A673 (cell line): ENCODE measurements at regions of chr4 and their contacts with region 1.

Region 1: DNA sequence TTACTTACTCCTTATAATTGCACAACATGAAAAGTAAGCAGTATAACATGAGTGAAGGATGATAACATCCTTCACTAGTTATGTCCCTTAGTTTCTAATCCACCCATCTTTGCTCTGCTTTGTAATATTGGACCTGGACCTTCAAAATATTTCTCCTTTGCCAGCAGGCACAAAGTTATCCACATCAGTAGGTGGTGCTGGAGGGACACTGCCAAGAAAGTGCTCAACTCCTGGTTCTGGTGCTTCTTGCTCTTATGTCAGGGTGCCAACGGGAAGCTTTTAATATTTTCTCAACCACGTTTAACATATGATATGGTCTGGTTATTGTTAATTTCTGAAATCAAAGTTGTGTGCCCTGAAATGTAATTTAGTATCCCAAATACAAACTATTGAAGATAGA is 49.1 kb downstream of the TMEM165 start:
- DNase-seq: peak; percentile 25
- H3K4me3 ChIP-seq: no peak overlapping the region
- H3K27ac ChIP-seq: no peak overlapping the region
- H3K4me1 ChIP-seq: no peaks in the 10 kb centered on the region
- H3K27me3 ChIP-seq: no peaks in the 10 kb centered on the region
- CTCF ChIP-seq: peak; percentile 31; the same call in 1 of the 2 replicates

Region 2: DNA sequence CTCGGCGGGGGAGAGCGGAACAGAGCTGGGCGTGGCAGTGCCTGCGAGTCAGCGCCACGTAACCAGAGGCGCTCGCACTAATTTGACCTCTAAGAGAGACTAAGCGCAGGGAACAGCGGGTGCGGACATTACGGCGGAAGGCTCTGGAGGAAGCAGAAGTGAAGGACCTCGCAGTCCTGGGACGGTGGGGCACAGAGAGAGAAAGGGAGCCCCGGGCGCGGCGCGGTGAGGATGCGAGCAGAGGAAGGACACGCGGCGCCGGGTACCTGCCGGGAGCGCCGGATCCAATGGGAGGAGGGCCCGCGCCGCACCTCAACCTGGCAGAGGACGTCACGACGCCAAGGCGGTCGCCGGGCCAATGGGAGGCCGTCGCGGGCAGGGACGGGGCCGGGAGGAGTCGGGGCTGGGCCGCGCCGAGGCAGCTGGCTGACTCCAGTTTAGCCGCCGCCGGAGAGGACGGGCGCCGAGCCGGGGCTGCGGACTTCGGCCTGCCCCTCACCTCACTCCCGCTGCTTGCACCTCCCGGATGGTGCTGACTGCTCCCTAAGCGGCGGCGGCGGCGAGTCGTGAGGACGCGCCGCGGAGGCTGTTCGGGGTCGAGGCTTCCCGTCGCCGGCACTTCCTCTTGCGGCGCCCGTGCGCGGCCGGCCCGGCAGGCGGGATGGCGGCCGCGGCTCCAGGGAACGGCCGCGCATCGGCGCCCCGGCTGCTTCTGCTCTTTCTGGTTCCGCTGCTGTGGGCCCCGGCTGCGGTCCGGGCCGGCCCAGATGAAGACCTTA is 49.1 kb before region 1 on chr4 and contains the start of gene TMEM165:
- CTCF ChIA-PET with region 1: no interaction called
- POLR2A ChIA-PET with region 1: no interaction called
- intact Hi-C with region 1: no loop called
- DNase-seq: peak; percentile 79
- H3K4me3 ChIP-seq: peak within 1 kb of the TSS; percentile 78
- H3K27ac ChIP-seq: peak within 1 kb of the TSS; percentile 81
- H3K4me1 ChIP-seq: peaks cover 9% of the 10 kb centered on the region
- H3K27me3 ChIP-seq: no peaks in the 10 kb centered on the region
- CTCF ChIP-seq: no peak
- total RNA-seq, gene TMEM165: 33.5 and 34.7 TPM in 2 replicates

Region 3: DNA sequence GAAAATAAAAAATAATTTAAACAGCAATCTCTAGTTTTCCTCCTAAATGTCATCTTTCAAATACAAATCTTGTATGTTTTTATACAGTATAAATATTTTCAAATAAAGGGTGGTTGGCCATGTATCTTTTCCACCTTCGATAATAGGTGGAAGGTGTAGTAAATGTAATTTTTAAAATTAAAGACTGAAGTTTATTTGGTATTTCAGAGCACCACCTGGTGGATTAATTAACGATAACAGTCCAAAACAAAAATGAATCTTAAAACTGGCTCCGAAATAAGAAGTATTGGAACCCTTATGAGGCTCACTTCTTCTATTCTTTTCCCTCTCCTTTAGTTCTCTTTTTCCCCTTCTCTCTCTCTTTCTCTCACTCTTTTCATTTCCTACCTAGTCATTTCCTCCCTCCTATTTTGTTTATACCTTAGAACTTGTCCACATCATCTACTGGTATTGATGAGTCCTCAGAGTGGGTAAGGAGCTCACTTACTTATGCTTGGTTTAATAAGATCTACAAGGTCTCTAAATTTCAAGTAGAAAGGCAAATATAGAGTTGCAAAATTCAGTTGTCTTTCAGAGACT is 291.9 kb after region 1 on chr4:
- CTCF ChIA-PET with region 1: no interaction called
- POLR2A ChIA-PET with region 1: no interaction called
- intact Hi-C with region 1: loop called (anchors 10 kb)
- DNase-seq: peak; percentile 1
- H3K4me3 ChIP-seq: no peak overlapping the region
- H3K27ac ChIP-seq: no peak overlapping the region
- H3K4me1 ChIP-seq: no peaks in the 10 kb centered on the region
- H3K27me3 ChIP-seq: no peaks in the 10 kb centered on the region
- CTCF ChIP-seq: peak; percentile 41